A673 (cell line): ENCODE measurements at regions of chr2 and their contacts with region 1.

Region 1: DNA sequence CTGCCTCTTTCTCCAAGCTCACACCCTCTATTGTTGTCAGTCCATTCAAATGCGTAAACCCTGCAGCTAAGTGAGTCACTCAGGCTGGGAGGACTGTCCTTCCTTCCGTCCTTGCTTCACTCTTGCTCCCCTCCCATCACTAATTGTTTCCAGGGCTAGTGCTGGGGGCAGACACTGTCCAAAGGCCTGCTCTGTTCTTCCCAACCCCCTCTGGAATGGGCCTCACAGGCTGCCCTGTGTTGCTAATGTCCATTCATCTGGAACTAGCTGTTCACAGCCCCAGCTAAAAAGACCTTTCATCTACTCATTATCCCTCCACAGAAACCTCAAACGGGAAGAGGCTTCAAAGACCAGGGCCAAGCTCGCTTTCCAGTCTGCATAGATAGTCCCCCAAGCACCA is 31.9 kb upstream of the NRP2 start:
- DNase-seq: no peak
- H3K4me3 ChIP-seq: no peak overlapping the region
- H3K27ac ChIP-seq: no peak overlapping the region
- H3K4me1 ChIP-seq: no peaks in the 10 kb centered on the region
- H3K27me3 ChIP-seq: no peaks in the 10 kb centered on the region
- CTCF ChIP-seq: no peak

Region 2: DNA sequence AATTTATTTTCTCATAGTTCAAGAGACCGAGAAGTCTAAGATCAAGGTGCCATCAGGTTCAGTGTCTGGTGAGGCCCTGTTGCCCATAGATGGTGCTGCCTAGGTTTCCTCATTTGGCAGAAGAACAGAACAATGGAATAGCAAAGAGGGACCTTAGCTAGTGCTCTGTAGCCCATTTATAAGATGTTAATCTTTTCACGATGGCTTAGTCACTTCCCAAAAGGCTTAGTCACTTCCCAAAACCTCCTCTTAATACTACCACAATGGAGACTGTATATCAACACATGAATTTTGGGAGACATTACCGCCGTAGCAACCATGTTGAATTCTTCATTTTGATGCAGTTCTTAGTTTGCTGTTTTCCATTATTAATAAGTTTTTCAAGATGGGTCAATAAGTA is 214.5 kb before region 1 on chr2:
- CTCF ChIA-PET with region 1: interaction called, 12 read pairs
- POLR2A ChIA-PET with region 1: no interaction called
- intact Hi-C with region 1: no loop called
- DNase-seq: peak; percentile 69
- H3K4me3 ChIP-seq: no peak overlapping the region
- H3K27ac ChIP-seq: no peak overlapping the region
- H3K4me1 ChIP-seq: no peaks in the 10 kb centered on the region
- H3K27me3 ChIP-seq: no peaks in the 10 kb centered on the region
- CTCF ChIP-seq: no peak

Region 3: DNA sequence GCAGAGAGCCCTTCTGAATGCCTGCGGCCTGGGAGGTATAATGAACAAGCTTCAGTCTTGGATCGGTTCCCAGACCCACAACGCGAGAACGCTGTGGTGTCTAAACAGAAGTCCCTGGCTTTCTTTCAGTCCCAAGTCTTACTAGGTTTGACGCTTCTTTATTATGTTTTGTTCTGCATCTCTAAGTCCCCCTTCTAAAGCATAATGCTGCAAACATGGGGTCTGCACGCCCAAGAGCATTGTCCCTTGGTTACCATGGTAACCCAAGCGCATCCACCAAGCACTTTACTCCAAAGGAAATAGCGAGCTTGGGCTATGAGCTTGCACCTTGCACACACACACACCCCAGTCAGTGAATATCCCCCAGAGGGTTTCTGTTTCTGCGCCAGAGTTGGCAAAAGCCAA is 241.8 kb after region 1 on chr2:
- CTCF ChIA-PET with region 1: no interaction called
- POLR2A ChIA-PET with region 1: no interaction called
- intact Hi-C with region 1: no loop called
- DNase-seq: peak; percentile 18
- H3K4me3 ChIP-seq: no peak overlapping the region
- H3K27ac ChIP-seq: no peak overlapping the region
- H3K4me1 ChIP-seq: no peaks in the 10 kb centered on the region
- H3K27me3 ChIP-seq: no peaks in the 10 kb centered on the region
- CTCF ChIP-seq: no peak